Heart left ventricle (tissue), 16 donors: ENCODE measurements at regions of chr1 and their contacts with region 1.

Region 1: DNA sequence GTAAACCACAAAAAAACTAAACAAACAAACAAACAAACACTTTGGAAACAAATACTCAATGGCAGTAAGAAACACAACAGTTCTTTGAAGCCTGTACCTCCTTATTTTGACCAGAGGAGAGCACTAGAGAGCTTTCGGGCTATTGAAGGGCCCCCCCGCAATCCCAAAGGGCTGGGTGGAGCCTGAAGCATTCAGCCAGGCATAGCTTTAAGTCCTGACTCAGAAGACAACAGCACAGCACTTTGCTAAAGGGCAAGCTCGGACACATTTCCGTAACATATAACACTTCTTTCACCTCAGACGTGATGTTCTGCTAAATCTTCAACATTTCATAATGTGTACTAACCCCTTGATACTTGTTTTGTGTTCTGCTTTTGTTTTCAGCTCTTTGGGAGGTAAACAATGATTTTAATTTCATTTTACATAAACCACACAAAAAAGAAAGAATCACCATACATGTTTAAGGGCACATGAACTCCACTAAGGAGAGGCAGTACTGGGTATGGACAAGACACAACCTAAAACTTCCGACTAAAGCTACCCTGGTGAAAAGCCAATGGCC is 9.7 kb upstream of the SHCBP1L start:
- DNase-seq: peak; percentile 69 to 86 (median 82)
- ATAC-seq: peak; percentile 97 to 100 (median 100)
- H3K4me3 ChIP-seq: peak overlapping the region in 10 of 12 donors; percentile 15 to 47 (median 32)
- H3K27ac ChIP-seq: peak overlapping the region in 11 of 12 donors; percentile 29 to 81 (median 68)
- H3K4me1 ChIP-seq: peaks cover 0 to 12% (median 5%) of the 10 kb centered on the region in 12 donors
- H3K27me3 ChIP-seq: no peaks in the 10 kb centered on the region
- CTCF ChIP-seq: peak; percentile 84 to 97 (median 92)
- POLR2A ChIP-seq: peak in 1 of 2 donors; percentile 67

Region 2: GRCh38 chr1:182839209-182840065 is 123.2 kb before region 1 on chr1 and contains the start of gene DHX9:
- intact Hi-C with region 1: no loop called
- DNase-seq: peak; percentile 93 to 98 (median 96)
- ATAC-seq: peak; percentile 81 to 95 (median 94)
- H3K4me3 ChIP-seq: peak within 1 kb of the TSS; percentile 52 to 96 (median 82)
- H3K27ac ChIP-seq: peak within 1 kb of the TSS; percentile 79 to 97 (median 88)
- H3K4me1 ChIP-seq: peaks cover 0 to 45% (median 30%) of the 10 kb centered on the region in 12 donors
- H3K27me3 ChIP-seq: no peaks in the 10 kb centered on the region
- CTCF ChIP-seq: peak in 5 of 12 donors; percentile 16 to 41 (median 30)
- POLR2A ChIP-seq: peak in 1 of 2 donors; percentile 75
- total RNA-seq, gene DHX9: 42.0 to 69.4 (median 60.9) TPM

Region 3: DNA sequence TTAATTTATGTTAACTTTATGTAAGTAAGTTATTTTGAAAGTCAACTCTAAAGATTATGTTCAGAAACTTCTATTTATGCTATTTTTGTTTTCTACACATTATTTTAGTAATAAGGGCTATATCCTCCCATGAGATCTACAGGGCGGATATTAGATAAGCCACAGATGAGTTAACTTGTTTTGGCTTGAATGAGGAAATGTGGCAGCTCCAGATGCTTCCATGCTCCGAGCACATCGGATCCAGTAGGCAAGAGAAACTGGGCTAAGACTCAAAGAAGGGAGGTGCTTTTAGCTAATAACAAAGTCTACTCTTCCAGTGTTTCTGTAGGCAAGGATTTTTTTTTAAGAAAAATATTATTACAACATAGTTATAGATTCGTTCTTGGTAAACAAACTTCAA is 40.6 kb after region 1 on chr1:
- intact Hi-C with region 1: loop called in 1 of 10 experiments (anchors 5 kb)
- DNase-seq: peak in 4 of 5 donors; percentile 31 to 47 (median 34)
- ATAC-seq: peak; percentile 71 to 94 (median 90)
- H3K4me3 ChIP-seq: peak overlapping the region in 1 of 12 donors; percentile 11
- H3K27ac ChIP-seq: peak overlapping the region in 11 of 12 donors; percentile 27 to 77 (median 60)
- H3K4me1 ChIP-seq: peaks cover 0 to 41% (median 13%) of the 10 kb centered on the region in 12 donors
- H3K27me3 ChIP-seq: no peaks in the 10 kb centered on the region
- CTCF ChIP-seq: no peak
- POLR2A ChIP-seq: no peak

Region 4: DNA sequence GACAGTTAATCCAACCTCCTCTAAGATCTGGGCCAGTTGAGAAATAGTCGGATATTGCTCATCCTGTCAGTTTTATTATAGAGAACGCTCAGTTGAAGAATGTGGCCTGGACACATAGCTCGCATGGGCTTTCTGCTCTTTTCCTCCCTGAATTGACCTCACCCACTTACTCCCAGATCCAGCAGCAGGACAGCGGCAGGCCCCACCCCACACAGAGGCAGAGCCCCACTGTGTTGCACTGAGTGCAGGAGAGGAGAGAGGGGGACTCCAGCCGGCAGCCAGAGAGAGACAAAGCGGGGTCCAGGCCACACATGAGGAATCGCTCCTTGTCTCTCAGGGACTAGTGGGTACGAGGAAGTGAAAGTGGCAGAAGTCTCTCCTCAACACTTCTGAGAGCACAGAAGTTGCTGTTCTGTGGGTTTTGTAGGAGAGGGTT is 139.2 kb after region 1 on chr1:
- intact Hi-C with region 1: loop called in 2 of 10 experiments (anchors 10 kb)
- DNase-seq: peak in 1 of 5 donors; percentile 44
- ATAC-seq: peak in 3 of 4 donors; percentile 40 to 52 (median 51)
- H3K4me3 ChIP-seq: peak overlapping the region in 1 of 12 donors; percentile 10
- H3K27ac ChIP-seq: peak overlapping the region in 3 of 12 donors; percentile 3 to 15 (median 4)
- H3K4me1 ChIP-seq: peaks cover 0 to 93% (median 68%) of the 10 kb centered on the region in 12 donors
- H3K27me3 ChIP-seq: no peaks in the 10 kb centered on the region
- CTCF ChIP-seq: no peak
- POLR2A ChIP-seq: no peak

Region 5: DNA sequence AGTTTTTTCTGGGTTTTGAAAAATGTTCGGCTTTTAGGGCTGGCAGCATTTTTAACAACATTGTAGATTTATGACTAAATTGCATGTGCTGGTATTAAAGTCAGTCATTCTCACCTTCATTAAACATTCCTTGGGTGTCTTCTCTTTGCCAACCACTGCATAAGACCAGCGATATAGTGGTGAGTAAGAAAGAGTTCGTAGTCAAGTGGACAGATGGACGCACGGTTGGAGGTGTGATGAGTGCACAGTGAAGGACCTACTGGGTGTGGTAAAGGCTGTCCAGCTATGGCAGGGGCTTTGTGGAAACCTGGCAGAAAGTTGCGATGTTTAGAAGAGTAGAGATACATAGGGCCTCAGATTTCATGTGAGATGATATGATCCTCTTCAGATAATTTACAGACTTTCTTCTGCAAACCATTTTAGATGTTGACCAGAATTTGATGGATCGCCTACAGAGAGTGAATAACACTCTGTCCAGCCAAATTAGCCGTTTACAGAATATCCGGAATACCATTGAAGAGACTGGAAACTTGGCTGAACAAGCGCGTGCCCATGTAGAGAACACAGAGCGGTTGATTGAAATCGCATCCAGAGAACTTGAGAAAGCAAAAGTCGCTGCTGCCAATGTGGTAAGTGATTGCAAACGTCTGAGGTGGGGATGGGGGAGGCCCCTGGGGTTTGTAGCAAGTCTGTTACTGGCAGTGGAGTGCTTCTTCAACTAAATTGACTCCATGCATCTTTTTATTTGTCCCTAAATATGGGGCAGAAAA is 167.5 kb after region 1 on chr1:
- intact Hi-C with region 1: loop called in 2 of 10 experiments (anchors 5 to 10 kb)
- DNase-seq: no peak
- ATAC-seq: peak in 2 of 4 donors; percentile 16 to 66
- H3K4me3 ChIP-seq: no peak overlapping the region
- H3K27ac ChIP-seq: peak overlapping the region in 2 of 12 donors; percentile 25 to 32
- H3K4me1 ChIP-seq: peaks cover 0 to 17% (median 0%) of the 10 kb centered on the region in 12 donors
- H3K27me3 ChIP-seq: no peaks in the 10 kb centered on the region
- CTCF ChIP-seq: no peak
- POLR2A ChIP-seq: no peak

Region 6: DNA sequence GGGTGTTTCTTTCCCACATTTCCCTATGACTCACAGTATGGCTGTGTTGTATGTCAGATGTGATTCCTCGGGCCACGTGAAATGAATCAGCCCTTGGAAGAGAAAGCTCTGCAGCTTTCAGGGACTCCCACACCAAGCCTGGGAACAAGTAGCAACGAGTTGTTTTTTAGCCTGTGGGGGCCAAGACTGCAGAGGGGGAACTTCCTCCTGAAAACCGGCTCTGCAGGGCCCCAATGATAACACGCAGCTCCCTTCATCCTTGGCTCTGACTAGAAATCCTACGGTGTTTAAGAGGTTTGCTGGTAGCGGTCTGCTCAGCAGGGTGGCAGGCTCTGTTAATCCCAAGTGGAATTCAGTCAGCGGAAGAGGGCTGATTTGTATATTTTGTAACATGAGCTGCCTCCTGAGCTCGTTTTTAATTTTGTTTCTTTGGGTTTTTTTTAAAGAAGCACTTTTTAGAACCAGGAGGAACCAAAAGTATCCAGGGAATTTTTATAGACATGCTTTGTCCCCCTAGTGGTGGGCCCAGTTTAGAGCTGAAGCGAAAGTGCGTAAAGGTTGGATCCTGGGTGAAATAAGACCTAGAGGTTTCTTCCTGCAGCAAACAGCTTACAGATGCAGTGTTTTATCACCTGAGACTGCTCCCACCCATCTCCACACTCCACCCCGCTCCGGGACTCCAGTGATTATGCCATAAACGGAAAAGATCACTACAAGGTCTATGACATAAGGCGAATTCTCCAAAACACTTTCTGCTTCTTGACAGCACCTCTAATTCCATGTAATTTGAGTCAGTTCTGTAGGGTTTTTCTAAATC is 272.2 kb after region 1 on chr1:
- intact Hi-C with region 1: loop called in 2 of 10 experiments (anchors 5 kb)
- DNase-seq: peak in 4 of 5 donors; percentile 68 to 76 (median 70)
- ATAC-seq: peak; percentile 70 to 92 (median 92)
- H3K4me3 ChIP-seq: peak overlapping the region in 10 of 12 donors; percentile 12 to 51 (median 32)
- H3K27ac ChIP-seq: peak overlapping the region; percentile 33 to 83 (median 72)
- H3K4me1 ChIP-seq: peaks cover 0 to 41% (median 10%) of the 10 kb centered on the region in 12 donors
- H3K27me3 ChIP-seq: no peaks in the 10 kb centered on the region
- CTCF ChIP-seq: peak in 11 of 12 donors; percentile 34 to 74 (median 59)
- POLR2A ChIP-seq: no peak

Region 7: DNA sequence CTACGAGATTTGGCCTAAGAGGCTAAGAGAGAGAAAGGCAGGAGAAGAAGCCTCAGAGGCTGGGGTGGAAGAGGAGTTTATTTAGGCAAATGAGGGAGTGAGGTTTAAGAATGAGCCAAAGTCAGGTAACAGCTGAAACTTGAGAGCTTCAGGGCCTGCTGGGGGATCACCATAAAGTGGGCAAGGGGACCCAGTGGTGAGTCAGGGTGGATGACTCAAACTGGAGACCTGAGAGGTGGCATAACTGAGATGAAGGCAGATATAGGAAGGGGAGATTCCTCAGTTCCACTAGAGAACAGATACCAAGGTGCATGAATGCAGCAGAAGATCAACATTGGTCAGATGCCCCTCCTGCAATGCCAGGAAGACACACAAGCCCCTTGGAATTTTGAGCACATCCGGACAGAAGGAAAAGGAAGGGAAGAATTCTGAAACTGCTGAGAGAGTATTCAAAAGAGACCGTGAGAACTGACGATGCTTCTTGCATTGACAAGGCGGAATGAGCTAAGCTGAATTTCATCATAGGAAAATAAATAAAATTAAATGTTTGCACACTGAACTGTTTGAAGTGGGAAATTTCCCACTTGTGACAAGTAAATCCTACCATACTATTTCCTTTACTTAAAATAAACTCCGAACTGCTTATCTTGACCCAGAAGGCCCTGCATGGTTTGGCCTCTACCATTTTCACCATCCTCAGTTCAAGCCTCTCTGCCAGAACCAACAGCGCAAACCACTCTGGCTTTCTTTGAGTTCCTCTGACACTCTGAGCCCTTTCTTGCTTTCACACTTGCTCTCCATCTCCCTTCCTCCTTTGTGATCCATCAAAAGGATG is 361.4 kb after region 1 on chr1:
- intact Hi-C with region 1: loop called (anchors 2 to 5 kb)
- DNase-seq: no peak
- ATAC-seq: no peak
- H3K4me3 ChIP-seq: no peak overlapping the region
- H3K27ac ChIP-seq: no peak overlapping the region
- H3K4me1 ChIP-seq: peaks cover 5 to 19% (median 13%) of the 10 kb centered on the region in 12 donors
- H3K27me3 ChIP-seq: no peaks in the 10 kb centered on the region
- CTCF ChIP-seq: no peak
- POLR2A ChIP-seq: no peak